ENCODE measurements at regions of chr2 and their contacts with region 1.

Region 1: DNA sequence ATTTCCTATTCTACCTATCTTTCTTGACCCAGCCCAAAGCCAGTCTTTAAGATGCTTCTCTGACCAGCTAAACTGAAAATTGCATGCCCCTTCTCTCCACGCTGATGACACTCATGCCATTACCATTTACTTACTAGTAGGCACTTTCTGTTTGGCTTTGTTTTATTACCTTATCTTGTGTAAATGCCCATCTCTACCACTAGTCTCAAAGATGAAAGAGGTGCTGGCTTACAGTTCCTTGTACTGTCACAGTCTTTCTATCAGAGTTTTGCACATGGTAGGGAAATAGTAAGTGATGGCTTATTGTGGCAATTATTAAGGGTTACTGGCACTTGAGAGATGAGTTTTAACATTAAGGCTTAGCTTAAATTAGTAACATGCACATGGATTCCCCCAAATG is 352.1 kb downstream of the RBM43 start:
- DNase-seq: no peak
- CTCF ChIP-seq: no peak

Region 2: GRCh38 chr2:150487537-150488429 is 421.8 kb before region 1 on chr2 and contains the start of gene RND3:
- CTCF ChIA-PET with region 1: no interaction called
- POLR2A ChIA-PET with region 1: no interaction called
- DNase-seq: peak; percentile 61
- CTCF ChIP-seq: peak; percentile 57

Region 3: GRCh38 chr2:150895968-150896367 is 13.6 kb before region 1 on chr2:
- CTCF ChIA-PET with region 1: interaction called, 14 read pairs
- POLR2A ChIA-PET with region 1: no interaction called
- DNase-seq: no peak
- CTCF ChIP-seq: no peak

Region 4: GRCh38 chr2:150924878-150925277 is 15.3 kb after region 1 on chr2:
- CTCF ChIA-PET with region 1: interaction called, 11 read pairs
- POLR2A ChIA-PET with region 1: no interaction called
- DNase-seq: no peak
- CTCF ChIP-seq: no peak

Measured in GM10248 (cell line).